Adrenal gland (tissue), 19 donors: ENCODE measurements at regions of chr2 and their contacts with region 1.

Region 1: DNA sequence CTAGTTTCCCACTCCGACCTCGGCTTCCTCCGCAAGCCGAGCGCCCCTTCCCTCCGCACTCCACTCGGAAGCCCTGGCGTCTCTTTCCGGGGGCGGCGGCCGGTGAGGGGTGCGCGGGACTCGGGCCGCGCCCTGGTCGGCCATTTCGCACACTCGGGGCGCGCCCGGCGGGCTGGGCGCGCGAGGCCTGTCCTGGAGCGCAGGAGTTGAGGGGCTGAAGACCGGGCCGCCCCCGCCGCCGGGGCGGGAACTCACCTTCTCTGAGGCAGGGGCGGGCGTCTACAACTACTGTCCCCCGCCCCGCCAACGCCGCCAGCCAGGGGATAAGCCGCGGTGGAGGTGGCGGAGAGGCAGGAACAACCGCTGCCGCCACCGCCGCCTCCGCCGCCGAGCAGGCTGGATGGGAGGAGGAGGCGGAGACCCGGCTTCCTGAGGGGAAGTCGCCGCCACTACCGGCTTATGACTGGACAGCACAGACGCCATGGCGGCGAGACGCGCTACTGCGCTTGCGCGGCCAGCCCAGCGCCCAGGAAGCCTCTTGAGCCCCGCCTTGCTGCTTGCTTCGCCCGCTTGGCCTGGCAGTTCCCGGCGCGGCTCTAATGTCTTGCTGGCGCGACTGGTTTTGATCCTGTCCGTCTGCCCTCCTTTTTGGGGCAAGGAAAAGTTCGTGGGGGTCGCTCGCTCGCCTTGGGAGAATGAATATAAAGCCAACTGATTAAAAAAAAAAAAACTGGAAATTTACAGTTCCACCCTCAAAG is at the start of gene KRCC1:
- DNase-seq: peak; percentile 95 to 97 (median 95)
- H3K4me3 ChIP-seq: peak within 1 kb of the TSS; percentile 50 to 98 (median 80)
- H3K27ac ChIP-seq: peak within 1 kb of the TSS; percentile 80 to 98 (median 95)
- H3K4me1 ChIP-seq: peaks cover 21 to 37% of the 10 kb centered on the region in 2 donors
- H3K27me3 ChIP-seq: no peaks in the 10 kb centered on the region
- CTCF ChIP-seq: peak in 2 of 6 experiments; percentile 18 to 31
- POLR2A ChIP-seq: peak; percentile 92 to 95
- total RNA-seq, gene KRCC1: 12.0 to 26.6 (median 19.2) TPM

Region 2: DNA sequence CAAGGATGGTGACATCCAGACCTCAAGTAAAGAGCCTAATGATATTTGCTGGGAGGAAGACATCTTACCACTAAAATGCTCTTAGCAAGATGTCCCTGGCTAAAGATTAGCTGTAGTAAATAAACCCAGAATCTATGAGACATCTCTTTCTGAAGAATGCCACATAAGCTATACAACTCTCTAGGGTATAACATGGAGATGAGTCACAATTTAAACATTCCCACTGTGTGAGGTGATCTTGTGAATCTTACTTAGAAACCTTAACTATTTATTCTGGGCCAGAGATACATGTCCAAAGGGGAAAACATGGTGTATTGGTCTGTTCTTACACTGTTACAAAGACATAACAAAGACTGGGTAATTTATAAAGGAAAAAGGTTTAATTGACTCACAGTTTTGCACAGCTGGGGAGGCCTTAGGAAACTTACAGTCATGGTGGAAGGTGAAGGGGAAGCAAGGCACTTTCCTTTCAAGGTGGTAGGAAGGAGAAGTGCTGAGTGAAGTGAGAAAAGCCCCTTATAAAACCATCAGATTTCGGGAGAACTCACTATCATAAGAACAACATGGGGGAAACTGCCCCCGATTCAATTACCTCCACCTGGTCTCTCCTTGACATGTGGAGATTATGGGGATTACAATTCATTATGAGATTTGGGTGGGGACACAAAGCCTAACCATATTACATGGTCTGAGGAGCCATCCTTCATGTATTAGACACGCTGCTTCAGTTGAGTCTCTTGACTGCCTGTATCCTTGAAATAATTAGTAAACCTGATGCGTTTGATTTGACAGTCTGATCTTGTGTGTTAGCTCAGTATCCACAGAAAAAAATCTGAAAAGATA is 17.1 kb before region 1 on chr2:
- intact Hi-C with region 1: no loop called
- DNase-seq: no peak
- H3K4me3 ChIP-seq: no peak overlapping the region
- H3K27ac ChIP-seq: no peak overlapping the region
- H3K4me1 ChIP-seq: peaks cover 9 to 16% of the 10 kb centered on the region in 2 donors
- H3K27me3 ChIP-seq: no peaks in the 10 kb centered on the region
- CTCF ChIP-seq: no peak
- POLR2A ChIP-seq: no peak

Region 3: GRCh38 chr2:88144914-88145497 is 89.5 kb after region 1 on chr2:
- intact Hi-C with region 1: no loop called
- DNase-seq: no peak
- H3K4me3 ChIP-seq: no peak overlapping the region
- H3K27ac ChIP-seq: no peak overlapping the region
- H3K4me1 ChIP-seq: no peaks in the 10 kb centered on the region
- H3K27me3 ChIP-seq: no peaks in the 10 kb centered on the region
- CTCF ChIP-seq: no peak
- POLR2A ChIP-seq: no peak

Region 4: GRCh38 chr2:88159955-88160415 is 104.4 kb after region 1 on chr2:
- intact Hi-C with region 1: loop called (anchors 2 to 5 kb)
- DNase-seq: peak; percentile 25 to 80 (median 57)
- H3K4me3 ChIP-seq: no peak overlapping the region
- H3K27ac ChIP-seq: no peak overlapping the region
- H3K4me1 ChIP-seq: no peaks in the 10 kb centered on the region
- H3K27me3 ChIP-seq: no peaks in the 10 kb centered on the region
- CTCF ChIP-seq: peak; percentile 67 to 86 (median 75)
- POLR2A ChIP-seq: no peak